Left colon (tissue), 2 donors: ENCODE measurements at regions of chr11 and their contacts with region 1.

Region 1: DNA sequence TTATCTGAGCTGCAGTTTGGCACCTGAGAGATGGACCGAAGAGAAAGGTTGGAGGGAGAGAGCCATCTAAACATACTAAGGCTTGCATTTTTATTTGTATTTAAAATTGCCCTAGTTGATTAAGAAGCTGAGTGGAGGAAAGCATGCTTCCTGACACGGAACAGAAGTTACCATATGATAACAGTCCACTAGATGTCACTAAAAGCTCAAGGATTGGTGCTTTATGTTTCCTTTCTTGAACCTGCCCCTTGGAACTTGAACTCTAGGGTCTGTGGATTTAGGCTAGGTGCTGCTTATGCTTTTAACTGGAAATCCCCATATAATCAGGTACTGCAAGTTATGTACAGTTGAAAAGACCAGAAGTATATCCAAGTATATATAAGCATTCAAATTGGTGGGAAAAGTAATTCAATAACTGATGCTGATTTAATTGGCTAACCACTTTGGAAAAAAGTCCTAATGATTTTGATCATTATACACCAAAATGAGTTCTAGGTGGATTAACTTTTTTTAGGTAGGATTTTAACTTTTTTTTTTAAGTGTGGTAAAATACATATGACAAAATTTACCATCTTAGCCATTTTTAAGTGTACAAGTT is 9.5 kb downstream of the RBMXL2 start:
- DNase-seq: no peak
- ATAC-seq: peak; percentile 64

Region 2: DNA sequence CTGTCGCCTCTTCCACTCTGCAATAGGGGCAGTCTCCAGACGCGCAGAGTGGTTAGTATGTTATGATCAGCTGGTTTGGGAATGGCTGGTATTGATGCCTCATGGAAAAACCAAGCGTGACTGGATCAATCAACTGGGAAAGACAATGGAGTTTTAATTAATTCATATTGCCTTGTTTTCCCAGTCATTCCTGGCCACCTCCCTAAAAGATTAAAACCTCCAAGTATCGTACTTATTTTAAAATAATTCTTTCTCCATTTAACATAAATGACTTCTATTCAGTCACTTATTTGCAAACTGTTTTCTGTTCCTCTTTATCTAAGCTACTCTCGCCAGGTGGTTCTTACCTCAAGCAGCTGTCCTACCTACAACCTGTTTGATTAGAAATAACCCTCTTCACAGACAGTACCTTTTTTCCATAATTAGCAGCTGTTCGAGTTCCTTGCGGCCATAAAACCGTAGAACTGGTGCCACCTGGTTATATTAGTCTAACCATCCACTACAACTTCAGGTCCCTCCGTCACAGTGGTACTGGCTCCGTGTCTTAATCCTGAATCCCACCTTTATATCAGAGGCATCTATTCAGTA is 171.2 kb before region 1 on chr11:
- intact Hi-C with region 1: no loop called
- DNase-seq: no peak
- ATAC-seq: no peak

Region 3: DNA sequence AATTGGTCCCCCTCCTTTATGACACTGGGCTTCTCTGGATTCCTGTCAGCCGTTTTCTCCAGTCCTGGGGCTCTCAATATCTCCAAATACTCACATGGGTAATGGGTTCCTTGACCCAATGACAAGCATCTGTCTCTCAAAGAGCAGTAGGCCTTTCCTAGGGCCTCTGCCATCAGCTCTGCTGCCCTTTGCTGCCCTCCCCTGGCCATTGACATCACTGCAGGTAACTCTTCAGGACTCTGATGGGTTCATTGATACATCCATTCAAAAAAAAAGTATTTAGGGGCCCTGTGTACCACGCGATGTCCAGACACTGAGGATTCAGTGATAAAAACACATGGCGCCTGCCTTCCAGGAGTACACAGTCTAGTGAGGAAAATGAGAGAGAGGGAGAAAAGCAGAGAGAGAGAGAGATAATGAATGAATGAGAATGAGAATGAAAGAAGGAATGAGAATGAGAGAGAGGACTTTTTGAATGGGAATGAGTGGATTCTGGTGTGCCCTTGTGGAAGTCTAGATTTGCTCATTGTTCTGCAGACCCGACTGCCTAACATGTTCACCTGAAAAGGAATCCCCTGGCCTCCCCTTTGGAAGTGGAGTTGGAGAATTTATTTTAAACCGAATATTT is 344.4 kb after region 1 on chr11:
- intact Hi-C with region 1: loop called in 1 of 2 experiments (anchors 10 kb)
- DNase-seq: peak; percentile 38 to 80
- ATAC-seq: peak; percentile 81

Region 4: DNA sequence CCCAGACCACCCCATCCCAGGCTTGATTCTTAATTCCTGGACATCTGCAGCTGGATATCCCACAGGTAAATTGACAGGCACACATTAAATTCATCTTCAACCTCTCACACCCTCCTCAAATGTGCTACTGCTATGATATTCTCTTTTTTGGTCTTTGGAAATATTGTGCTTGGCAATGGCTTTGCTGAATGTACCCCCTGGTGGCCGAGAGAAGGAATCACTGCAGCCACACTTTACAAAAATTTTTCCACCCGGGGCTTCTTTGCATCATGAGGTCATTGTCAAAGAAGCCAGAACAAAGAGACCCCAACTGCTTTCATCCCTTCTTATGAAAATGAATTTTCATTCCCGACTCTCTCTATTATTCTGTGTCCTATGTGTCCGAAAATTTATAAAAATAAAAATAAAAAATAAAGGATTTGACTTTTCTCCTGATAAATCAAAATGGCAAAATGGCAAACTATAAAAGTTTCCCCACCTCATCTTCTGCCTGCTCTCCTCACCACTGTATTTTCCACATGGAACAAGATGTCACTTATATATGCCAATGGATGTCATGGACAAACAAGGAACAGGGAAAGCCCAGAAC is 590.0 kb after region 1 on chr11:
- intact Hi-C with region 1: loop called in 1 of 2 experiments (anchors 10 kb)
- DNase-seq: no peak
- ATAC-seq: no peak